CD4-positive, alpha-beta memory T cell (primary cell): ENCODE measurements at regions of chr14 and their contacts with region 1.

Region 1: DNA sequence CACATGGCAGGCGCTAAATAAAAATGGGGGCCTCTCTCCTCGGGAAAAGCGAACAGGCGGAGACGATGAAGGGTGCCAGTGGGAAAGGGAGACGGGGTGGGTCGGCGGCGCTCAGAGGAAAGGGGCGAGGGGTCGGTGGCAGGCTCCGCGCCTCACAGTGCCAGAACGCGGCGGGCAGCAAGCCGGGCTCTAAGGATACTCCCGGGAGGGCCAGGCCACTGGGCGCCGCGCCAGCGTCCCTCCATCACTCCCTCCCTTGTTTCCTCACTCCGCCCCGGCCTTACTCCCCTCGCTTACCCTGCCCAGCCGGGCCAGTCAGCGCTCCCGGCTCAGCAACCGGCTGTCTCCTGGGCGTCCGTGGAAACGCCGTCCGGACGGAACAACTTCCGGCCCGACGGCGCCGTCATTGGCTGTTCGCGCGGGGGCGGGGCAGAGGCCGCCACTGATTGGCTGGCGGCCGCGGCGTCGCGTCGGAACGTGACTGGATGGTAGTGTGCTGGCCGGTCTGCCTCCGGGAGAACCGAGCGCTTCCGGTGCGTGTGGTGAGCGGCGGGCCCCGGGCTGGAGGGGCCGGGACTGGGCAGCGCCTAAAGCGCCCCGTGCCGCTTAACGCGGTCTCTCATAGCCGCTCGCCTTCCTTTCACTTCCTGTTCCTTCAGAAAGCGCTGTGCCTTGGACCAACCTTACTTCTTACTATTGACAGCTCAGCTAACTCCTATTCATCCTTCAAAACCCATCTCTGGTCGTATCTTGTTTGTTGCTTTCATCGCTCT is 53.0 kb downstream of the SLC25A47 start:
- DNase-seq: peak; percentile 88 to 93 (median 90)
- H3K4me3 ChIP-seq: peak within 1 kb of the TSS; percentile 83 to 92
- H3K4me3 Mint-ChIP-seq: peak within 1 kb of the TSS; percentile 92 to 97 (median 94)
- H3K27ac ChIP-seq: peak within 1 kb of the TSS; percentile 79
- H3K27ac Mint-ChIP-seq: peak within 1 kb of the TSS; percentile 90 to 96 (median 94)
- H3K4me1 ChIP-seq: peaks cover 28% of the 10 kb centered on the region
- H3K4me1 Mint-ChIP-seq: peaks cover 23 to 53% (median 32%) of the 10 kb centered on the region in 4 donors
- H3K27me3 ChIP-seq: no peaks in the 10 kb centered on the region
- H3K27me3 Mint-ChIP-seq: no peaks in the 10 kb centered on the region

Region 2: GRCh38 chr14:99729991-99730868 is 645.9 kb before region 1 on chr14:
- CTCF ChIA-PET with region 1: no interaction called
- POLR2A ChIA-PET with region 1: no interaction called
- intact Hi-C with region 1: loop called (anchors 5 kb)
- DNase-seq: peak in 4 of 5 donors; percentile 52 to 63 (median 56)
- H3K4me3 ChIP-seq: no peak overlapping the region
- H3K4me3 Mint-ChIP-seq: peak overlapping the region in 4 of 8 donors; percentile 32 to 64 (median 48)
- H3K27ac ChIP-seq: no peak overlapping the region
- H3K27ac Mint-ChIP-seq: peak overlapping the region in 1 of 7 donors; percentile 61
- H3K4me1 ChIP-seq: no peaks in the 10 kb centered on the region
- H3K4me1 Mint-ChIP-seq: no peaks in the 10 kb centered on the region
- H3K27me3 ChIP-seq: peaks cover 2% of the 10 kb centered on the region
- H3K27me3 Mint-ChIP-seq: peaks cover 20 to 33% of the 10 kb centered on the region in 2 donors

Region 3: DNA sequence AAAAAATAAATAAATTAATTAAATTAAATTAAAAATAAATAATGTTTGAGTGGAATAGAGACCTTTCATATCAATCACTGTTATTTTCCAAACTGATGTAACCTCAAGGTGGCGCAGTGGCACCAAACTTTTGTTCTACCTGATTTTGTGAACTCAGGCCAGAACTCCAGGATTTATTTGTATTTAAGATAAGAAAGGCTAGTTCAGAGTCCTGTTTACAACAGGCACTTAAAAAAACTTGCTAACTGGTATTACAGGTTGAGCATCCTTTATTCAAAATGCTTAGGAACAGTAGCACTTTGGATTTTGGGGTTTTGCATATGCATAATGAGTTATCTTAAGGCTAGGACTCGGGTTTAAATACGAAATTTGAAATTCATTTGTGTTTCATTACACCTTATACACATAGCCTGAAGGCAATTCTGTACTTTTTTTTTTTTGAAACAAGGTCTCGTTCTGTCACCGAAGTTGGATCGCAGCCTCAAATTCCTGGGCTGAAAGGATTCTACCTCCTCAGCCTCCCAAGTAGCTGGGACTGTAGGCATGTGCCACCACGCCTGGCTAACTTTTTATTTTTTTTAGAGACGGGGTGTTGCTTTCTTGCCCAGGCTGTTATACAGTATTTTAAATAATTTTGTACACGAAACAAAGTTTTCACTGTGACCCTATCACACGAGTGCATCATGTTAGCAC is 104.8 kb before region 1 on chr14:
- CTCF ChIA-PET with region 1: interaction called, 3 read pairs
- POLR2A ChIA-PET with region 1: no interaction called
- intact Hi-C with region 1: loop called (anchors 1 kb)
- DNase-seq: peak in 2 of 5 donors; percentile 17 to 20
- H3K4me3 ChIP-seq: no peak overlapping the region
- H3K4me3 Mint-ChIP-seq: no peak overlapping the region
- H3K27ac ChIP-seq: no peak overlapping the region
- H3K27ac Mint-ChIP-seq: peak overlapping the region in 1 of 7 donors; percentile 48
- H3K4me1 ChIP-seq: peaks cover 61% of the 10 kb centered on the region
- H3K4me1 Mint-ChIP-seq: peaks cover 45 to 72% (median 61%) of the 10 kb centered on the region in 4 donors
- H3K27me3 ChIP-seq: no peaks in the 10 kb centered on the region
- H3K27me3 Mint-ChIP-seq: no peaks in the 10 kb centered on the region

Region 4: GRCh38 chr14:100285021-100285912 is 90.9 kb before region 1 on chr14:
- CTCF ChIA-PET with region 1: interaction called, 3 read pairs
- POLR2A ChIA-PET with region 1: no interaction called
- intact Hi-C with region 1: loop called (anchors 1 kb)
- DNase-seq: peak; percentile 78 to 83 (median 80)
- H3K4me3 ChIP-seq: peak overlapping the region in 1 of 2 donors; percentile 85
- H3K4me3 Mint-ChIP-seq: peak overlapping the region in 6 of 8 donors; percentile 64 to 83 (median 72)
- H3K27ac ChIP-seq: peak overlapping the region; percentile 83
- H3K27ac Mint-ChIP-seq: peak overlapping the region in 3 of 7 donors; percentile 60 to 83 (median 78)
- H3K4me1 ChIP-seq: peaks cover 13% of the 10 kb centered on the region
- H3K4me1 Mint-ChIP-seq: peaks cover 3 to 16% (median 6%) of the 10 kb centered on the region in 4 donors
- H3K27me3 ChIP-seq: no peaks in the 10 kb centered on the region
- H3K27me3 Mint-ChIP-seq: no peaks in the 10 kb centered on the region

Region 5: DNA sequence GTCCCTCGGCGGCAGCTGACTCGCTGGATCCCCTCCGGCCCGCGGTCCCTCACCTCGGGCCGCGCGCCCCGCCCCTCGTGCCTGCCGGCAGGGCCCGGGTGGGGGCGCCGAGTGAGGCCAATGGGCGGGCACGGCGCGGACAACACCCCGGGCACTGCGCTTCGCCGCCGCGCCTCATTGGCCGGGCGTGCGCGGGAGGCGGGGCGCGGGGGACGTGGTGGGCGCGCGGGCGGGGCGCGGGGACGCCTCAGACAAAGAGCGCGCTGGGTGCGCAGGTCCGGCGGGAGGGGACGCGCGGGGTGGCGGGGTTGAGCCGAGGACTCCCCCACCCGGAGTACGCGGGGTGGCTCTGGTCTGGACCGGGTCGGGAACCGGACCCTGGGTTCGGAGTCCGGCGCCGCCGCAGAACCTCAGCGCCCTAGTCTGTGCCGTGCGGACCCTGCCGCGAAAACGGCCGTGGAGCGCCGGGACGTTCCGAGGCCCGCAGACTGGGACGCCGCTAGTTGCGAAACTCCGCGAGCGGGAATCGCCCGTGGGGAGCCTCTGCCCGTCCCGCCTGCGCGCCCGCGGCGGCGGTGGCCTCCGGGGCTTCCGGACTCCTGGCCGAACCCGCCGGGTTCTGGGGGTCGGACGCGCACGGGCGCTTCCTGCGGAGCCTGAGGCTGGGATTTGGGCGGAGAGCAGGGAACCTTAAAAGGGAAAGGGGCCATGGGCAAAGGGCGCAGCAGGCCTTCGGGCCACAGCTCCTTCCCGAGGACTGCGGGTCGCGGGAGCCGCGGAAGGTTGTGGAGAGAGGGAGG is 69.5 kb before region 1 on chr14 and contains the start of gene SLC25A29:
- CTCF ChIA-PET with region 1: no interaction called
- POLR2A ChIA-PET with region 1: no interaction called
- intact Hi-C with region 1: loop called (anchors 1 kb)
- DNase-seq: peak; percentile 52 to 64 (median 57)
- H3K4me3 ChIP-seq: peak within 1 kb of the TSS; percentile 42 to 60
- H3K4me3 Mint-ChIP-seq: peak within 1 kb of the TSS; percentile 82 to 90 (median 84)
- H3K27ac ChIP-seq: peak within 1 kb of the TSS; percentile 46
- H3K27ac Mint-ChIP-seq: peak within 1 kb of the TSS in 2 of 7 donors; percentile 60 to 93
- H3K4me1 ChIP-seq: peaks cover 10% of the 10 kb centered on the region
- H3K4me1 Mint-ChIP-seq: peaks cover 5 to 13% (median 9%) of the 10 kb centered on the region in 4 donors
- H3K27me3 ChIP-seq: no peaks in the 10 kb centered on the region
- H3K27me3 Mint-ChIP-seq: no peaks in the 10 kb centered on the region
- total RNA-seq, gene SLC25A29: 7.9 to 8.1 TPM

Region 6: DNA sequence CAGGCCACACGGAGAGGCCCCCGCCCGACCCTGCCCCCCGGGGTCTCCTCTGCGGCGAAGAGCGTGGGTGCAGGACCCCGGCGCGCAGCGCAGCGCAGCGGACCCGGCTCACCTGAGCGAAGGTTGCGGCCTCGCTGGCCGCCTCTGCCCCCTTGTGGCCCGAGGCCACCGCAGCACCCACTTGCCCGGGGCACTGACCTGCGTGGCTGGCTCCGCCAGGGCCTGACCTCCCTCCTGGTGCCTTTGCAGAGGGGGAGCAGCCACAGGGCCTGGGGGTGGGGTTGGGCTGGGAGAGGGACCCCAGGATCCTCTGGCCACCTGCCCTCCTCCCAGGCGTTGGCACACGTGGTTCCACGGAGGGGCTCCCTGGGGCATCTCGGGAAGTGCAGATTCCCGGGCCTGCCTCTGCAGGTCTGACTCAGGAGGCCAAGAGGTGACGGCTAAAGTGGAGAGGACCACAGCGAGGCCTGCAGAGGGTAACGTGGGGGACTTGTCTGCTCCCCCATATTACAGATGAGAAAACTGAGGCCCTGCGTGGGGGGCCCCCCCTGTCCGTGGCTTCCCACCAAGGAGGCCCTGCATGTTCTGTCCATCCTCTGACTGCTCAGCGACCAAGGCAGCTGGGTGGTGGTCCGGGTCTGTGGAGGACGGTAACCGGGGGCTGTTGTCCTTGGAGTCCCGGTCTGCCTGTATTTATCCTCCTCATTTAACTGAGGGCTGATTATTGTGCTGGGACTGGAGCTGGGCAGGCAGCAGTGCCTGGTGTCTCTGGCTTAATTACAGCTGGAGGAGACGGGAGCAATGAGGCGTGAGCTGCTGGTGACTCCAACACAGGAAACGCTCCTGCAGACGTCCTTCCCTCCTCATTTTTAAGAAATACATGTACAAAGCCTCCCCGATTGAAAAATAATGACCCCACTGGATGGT is 278.9 kb after region 1 on chr14:
- CTCF ChIA-PET with region 1: interaction called, 185 read pairs
- POLR2A ChIA-PET with region 1: no interaction called
- intact Hi-C with region 1: no loop called
- DNase-seq: peak in 4 of 5 donors; percentile 41 to 45 (median 43)
- H3K4me3 ChIP-seq: no peak overlapping the region
- H3K4me3 Mint-ChIP-seq: no peak overlapping the region
- H3K27ac ChIP-seq: no peak overlapping the region
- H3K27ac Mint-ChIP-seq: no peak overlapping the region
- H3K4me1 ChIP-seq: peaks cover 14% of the 10 kb centered on the region
- H3K4me1 Mint-ChIP-seq: peaks cover 0 to 11% (median 4%) of the 10 kb centered on the region in 4 donors
- H3K27me3 ChIP-seq: peaks cover 4% of the 10 kb centered on the region
- H3K27me3 Mint-ChIP-seq: peaks cover 7 to 15% of the 10 kb centered on the region in 2 donors